ENCODE measurements at regions of chr14 and their contacts with region 1.

Region 1: DNA sequence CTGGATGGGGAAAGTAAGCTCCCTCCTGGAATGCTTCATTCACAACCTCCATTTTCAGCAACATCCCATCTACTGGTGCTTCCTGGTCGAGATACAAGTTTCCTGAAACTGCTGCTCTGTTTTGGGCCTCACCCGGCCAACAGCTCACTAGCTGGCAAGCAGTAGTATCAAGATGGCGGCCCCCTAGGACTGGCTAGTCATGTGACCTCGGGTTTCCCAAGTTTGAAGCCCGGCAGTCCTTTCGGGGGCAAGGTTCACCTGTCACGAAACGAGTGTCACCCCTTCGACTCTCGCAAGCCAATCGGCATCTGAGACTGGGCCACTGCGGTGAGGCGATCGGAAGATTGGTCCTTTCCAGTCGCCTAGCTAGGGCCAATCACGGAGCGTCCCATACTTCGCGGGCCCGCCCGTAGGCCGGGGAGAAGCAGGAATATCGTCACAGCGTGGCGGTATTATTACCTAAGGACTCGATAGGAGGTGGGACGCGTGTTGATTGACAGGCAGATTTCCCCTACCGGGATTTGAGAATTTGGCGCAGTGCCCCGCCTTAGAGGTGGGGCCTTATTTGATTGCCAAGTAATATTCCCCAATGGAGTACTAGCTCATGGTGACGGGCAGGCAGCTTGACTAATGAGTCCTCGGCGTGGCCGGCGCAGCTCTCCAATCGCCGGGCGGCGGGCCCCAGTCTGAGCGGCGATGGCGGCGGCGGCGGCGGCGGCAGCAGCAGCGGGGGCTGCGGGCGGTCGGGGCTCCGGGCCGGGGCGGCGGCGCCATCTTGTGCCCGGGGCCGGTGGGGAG is at the start of gene PABPN1:
- DNase-seq: peak; percentile 98 to 99
- ATAC-seq: peak; percentile 98
- H3K4me3 ChIP-seq: peak within 1 kb of the TSS; percentile 81 to 91
- H3K27ac ChIP-seq: peak within 1 kb of the TSS; percentile 80 to 94
- H3K4me1 ChIP-seq: no peaks in the 10 kb centered on the region
- H3K27me3 ChIP-seq: no peaks in the 10 kb centered on the region
- total RNA-seq, gene PABPN1: 106 to 139 TPM

Region 2: GRCh38 chr14:23286020-23286905 is 34.7 kb before region 1 on chr14 and contains the start of gene HOMEZ:
- intact Hi-C with region 1: loop called in 1 of 2 experiments (anchors 1 kb)
- DNase-seq: peak; percentile 100
- ATAC-seq: peak; percentile 100
- H3K4me3 ChIP-seq: peak within 1 kb of the TSS; percentile 70 to 79
- H3K27ac ChIP-seq: peak within 1 kb of the TSS; percentile 65 to 77
- H3K4me1 ChIP-seq: no peaks in the 10 kb centered on the region
- H3K27me3 ChIP-seq: no peaks in the 10 kb centered on the region
- total RNA-seq, gene HOMEZ: 5.8 to 10.6 TPM

Region 3: GRCh38 chr14:23366426-23366921 is 45.5 kb after region 1 on chr14:
- intact Hi-C with region 1: loop called in 1 of 2 experiments (anchors 5 kb)
- DNase-seq: peak; percentile 85 to 91
- ATAC-seq: peak; percentile 79
- H3K4me3 ChIP-seq: peak overlapping the region; percentile 59 to 72
- H3K27ac ChIP-seq: peak overlapping the region; percentile 48 to 78
- H3K4me1 ChIP-seq: no peaks in the 10 kb centered on the region
- H3K27me3 ChIP-seq: no peaks in the 10 kb centered on the region

Region 4: GRCh38 chr14:23469127-23469905 is 148.3 kb after region 1 on chr14 and contains the start of gene NGDN:
- intact Hi-C with region 1: loop called in 1 of 2 experiments (anchors 5 kb)
- DNase-seq: peak; percentile 95 to 97
- ATAC-seq: peak; percentile 98
- H3K4me3 ChIP-seq: peak within 1 kb of the TSS; percentile 56 to 85
- H3K27ac ChIP-seq: peak within 1 kb of the TSS in 1 of 2 donors; percentile 79
- H3K4me1 ChIP-seq: no peaks in the 10 kb centered on the region
- H3K27me3 ChIP-seq: no peaks in the 10 kb centered on the region
- total RNA-seq, gene NGDN: 30.8 to 34.5 TPM

Region 5: DNA sequence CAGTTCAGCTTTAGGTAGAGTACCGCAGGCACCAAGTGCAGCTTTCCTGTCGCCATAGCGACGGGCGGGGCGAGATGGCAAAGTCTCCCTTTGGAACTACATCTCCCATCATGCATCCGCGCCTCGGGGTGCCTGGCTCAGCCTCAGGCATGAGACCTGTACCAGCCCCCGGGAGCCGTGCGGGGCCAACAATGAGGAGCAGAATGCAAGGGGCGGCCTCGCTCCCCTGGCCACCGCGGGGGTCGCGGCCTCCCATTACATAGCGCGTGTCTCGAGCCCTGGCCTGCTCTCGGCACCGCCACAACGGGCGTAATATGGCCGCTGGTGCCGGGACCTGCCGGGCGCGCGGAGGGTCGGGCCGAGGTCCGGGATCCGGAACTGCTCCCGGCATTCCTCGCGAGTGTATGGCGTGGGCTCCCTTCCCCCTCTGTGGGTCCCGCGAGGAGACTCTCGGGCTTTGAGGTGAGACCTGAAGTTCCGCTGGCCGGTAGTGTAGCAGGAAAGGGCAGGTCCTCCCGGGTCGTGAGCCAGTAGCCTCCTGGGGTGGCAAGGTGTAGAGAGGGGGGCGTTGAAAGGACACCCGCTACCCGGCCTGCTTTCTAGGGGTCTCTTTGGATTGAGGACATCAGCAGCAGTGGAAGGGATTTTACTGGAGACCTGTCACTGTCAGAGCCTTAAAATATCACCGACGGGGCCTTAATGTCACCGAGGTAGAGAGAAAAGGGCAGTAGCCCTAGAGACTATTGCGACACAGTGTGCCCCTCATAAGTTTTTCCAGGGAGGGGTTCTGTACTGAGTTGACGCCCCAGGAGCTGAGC is 235.1 kb after region 1 on chr14 and contains the start of gene THTPA:
- intact Hi-C with region 1: loop called (anchors 10 kb)
- DNase-seq: peak; percentile 96 to 98
- ATAC-seq: peak; percentile 96
- H3K4me3 ChIP-seq: peak within 1 kb of the TSS; percentile 46 to 91
- H3K27ac ChIP-seq: peak within 1 kb of the TSS; percentile 70 to 76
- H3K4me1 ChIP-seq: no peaks in the 10 kb centered on the region
- H3K27me3 ChIP-seq: no peaks in the 10 kb centered on the region
- total RNA-seq, gene THTPA: 13.0 to 13.7 TPM

Region 6: DNA sequence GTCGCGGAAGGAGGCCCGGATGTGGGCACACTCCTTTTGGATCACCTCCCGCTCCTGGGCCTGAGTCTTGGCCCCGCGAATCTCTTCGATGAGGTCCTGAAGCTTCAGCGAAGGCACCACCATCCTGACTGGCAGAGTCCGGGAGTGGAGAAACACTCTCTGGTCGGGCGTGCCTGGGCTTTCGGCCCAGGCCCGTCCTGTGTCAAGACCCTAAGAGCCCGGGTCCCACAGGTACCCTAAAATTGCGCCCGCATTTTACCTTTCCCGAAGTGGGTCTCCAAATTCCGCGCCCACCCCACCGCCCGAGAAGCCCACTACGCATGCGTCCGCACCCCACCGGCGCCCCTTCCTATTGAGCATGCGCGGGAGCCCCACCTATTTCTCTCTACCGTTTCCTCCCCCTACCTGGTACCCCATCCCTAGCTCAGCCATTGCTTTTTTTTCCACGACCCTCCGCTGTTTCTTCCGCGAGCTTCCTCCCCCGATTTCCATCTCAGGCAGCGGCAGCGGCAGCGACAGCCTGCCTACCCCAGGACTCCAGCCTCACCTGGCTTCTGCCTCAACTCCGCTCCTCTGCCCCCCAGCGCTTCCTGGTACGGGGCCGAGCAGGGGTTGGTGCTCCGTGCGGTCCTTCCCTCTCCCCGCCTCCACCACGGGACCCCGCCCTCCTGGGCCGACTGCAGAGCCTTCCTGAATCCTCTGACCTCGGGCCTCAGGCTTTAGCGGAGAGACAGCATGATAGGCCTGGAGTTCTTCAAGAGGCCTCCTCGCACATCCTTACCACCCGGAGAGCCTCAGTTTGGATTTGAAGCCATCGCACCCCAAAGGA is 246.4 kb after region 1 on chr14 and contains the start of gene AP1G2:
- intact Hi-C with region 1: loop called in 1 of 2 experiments (anchors 10 kb)
- DNase-seq: peak; percentile 91 to 92
- ATAC-seq: peak; percentile 80
- H3K4me3 ChIP-seq: peak within 1 kb of the TSS; percentile 14 to 43
- H3K27ac ChIP-seq: no peak within 1 kb of the TSS
- H3K4me1 ChIP-seq: no peaks in the 10 kb centered on the region
- H3K27me3 ChIP-seq: no peaks in the 10 kb centered on the region
- total RNA-seq, gene AP1G2: 36.9 to 78.6 TPM